ENCODE measurements at regions of chrX and their contacts with region 1.

Region 1: GRCh38 chrX:107676559-107677378 is 48.5 kb downstream of the PRPS1 start:
- DNase-seq: peak; percentile 68 to 95 (median 82)
- ATAC-seq: peak; percentile 68
- H3K4me3 ChIP-seq: peak overlapping the region; percentile 27 to 52
- H3K27ac ChIP-seq: peak overlapping the region; percentile 83 to 99
- H3K4me1 ChIP-seq: peaks cover 30 to 54% of the 10 kb centered on the region in 2 donors
- H3K27me3 ChIP-seq: peaks cover 0 to 2% of the 10 kb centered on the region in 2 donors
- CTCF ChIP-seq: no peak

Region 2: DNA sequence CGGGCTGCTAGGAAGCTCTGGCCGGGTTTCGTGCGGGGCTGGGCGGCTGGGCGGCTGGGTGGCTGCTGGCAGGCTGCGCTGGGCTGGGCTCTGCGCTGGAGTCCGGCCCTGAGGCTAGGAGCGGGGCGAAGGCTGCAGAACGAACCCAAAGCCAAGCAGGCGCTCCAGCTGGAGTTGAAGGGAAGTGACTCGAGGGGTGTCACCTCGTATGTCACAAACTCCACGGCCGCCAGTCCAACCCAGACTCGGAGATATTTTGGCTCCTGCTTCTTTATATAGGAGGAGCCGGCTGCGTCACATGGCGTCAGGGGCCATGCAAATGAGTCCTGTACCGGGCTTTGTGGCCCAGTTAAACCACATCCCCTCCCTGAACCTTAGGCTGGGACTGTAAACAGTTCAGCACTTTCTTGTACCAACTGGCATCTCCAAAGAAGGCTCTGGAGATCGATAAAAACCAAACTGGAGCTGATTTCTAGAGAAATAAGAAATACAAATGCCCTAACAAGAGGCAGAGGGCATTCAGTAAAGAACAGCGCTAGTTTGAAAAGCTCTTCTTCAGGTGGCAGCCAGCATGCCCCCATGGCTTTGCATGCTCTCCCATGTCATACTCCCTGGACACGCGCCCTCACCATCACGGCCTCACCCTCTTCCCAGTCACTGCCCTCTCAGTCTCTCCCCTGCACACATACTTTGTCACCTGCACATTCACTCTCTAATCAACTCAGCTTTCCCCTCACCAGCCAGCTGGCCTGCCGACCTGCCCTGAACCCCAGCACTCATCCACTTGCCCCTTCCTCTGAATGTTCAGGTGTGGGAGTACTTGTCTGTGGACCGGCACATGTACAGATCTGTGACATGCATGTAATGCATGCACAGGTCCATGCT is 40.3 kb after region 1 on chrX:
- intact Hi-C with region 1: loop called in 1 of 2 experiments (anchors 5 kb)
- DNase-seq: peak in 3 of 4 donors; percentile 83 to 90 (median 88)
- ATAC-seq: peak; percentile 70
- H3K4me3 ChIP-seq: peak overlapping the region; percentile 54 to 72
- H3K27ac ChIP-seq: peak overlapping the region; percentile 92 to 98
- H3K4me1 ChIP-seq: peaks cover 4 to 58% of the 10 kb centered on the region in 2 donors
- H3K27me3 ChIP-seq: no peaks in the 10 kb centered on the region
- CTCF ChIP-seq: no peak

Region 3: DNA sequence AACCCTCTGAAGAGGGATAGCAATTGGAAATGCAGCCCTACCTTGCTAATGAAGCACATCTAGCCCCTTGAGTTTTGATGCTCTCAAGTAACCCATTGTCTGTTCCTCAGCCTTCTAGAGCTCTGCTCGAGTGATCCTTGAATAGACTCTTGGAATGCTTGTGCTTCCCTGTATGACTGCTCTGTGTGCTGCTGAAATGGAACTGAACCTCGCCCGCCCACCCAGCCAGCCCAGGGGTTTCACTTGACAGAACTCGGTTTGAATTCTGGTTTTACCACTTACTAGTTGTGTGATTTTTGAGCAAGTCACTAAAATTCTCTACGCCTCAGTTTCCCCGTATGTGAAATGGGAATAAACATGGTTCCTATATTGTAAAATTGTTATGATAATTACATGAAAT is 226.0 kb after region 1 on chrX:
- intact Hi-C with region 1: no loop called
- DNase-seq: no peak
- ATAC-seq: peak; percentile 21
- H3K4me3 ChIP-seq: no peak overlapping the region
- H3K27ac ChIP-seq: no peak overlapping the region
- H3K4me1 ChIP-seq: no peaks in the 10 kb centered on the region
- H3K27me3 ChIP-seq: peaks cover 0 to 9% of the 10 kb centered on the region in 2 donors
- CTCF ChIP-seq: no peak

Region 4: DNA sequence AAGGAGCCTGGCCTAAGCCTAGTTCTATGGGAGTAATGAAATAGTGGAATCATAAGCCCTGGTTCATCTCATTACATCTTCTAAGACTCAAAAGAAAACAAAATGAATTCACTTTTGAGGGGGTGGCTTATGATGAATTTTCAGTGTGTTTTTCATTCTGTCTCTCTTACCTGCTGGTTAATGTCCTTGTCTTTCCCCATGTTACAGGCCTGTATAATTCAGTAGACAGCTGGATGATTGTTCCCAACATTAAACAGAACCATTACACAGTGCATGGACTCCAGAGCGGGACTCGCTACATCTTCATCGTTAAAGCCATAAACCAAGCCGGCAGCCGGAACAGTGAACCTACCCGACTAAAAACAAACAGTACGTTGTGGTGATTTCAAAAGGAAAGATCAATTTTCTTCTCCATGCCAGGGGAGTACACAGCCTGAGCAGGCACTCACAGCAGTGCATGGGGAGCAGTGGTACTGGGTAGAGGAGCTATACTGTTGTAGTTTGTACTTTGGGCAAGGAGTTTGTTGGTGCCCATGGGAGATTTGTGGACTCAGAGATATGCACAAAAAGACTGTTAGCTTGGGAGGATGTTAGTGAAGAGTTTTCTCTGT is 247.5 kb after region 1 on chrX:
- intact Hi-C with region 1: no loop called
- DNase-seq: no peak
- ATAC-seq: no peak
- H3K4me3 ChIP-seq: no peak overlapping the region
- H3K27ac ChIP-seq: no peak overlapping the region
- H3K4me1 ChIP-seq: no peaks in the 10 kb centered on the region
- H3K27me3 ChIP-seq: no peaks in the 10 kb centered on the region
- CTCF ChIP-seq: no peak

Measured in left lung (tissue), 14 donors.